GM10248 (cell line): ENCODE measurements at regions of chr12 and their contacts with region 1.

Region 1: DNA sequence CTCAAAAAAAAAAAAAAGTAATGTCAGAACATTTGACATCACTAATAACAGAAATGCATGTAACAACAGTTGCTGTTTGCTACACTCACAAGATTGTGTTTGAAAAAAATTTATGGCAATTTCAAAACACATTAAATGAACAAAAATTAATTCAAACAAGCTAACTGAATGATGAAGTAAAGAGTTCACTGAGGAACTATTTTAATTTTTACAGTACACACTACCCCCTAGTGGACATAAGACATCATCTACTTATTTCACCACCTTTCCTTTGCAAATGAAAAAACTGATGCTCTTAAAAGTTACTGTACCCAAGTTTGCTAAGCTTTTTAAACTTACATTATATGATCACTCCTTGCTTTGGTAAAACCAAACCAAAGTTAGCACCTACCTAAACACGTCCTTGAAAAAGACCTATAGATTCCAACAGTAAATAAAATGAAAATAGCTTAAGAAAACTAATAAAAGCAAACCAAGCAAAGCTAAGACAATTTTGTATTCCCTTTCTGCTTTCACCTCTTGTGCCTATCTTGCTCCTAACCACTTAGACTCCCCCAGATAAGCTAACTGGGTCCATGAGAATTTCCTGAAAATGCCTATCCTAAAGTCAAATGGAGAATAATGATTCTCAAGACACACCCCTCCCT is 22.2 kb downstream of the UBE2N start:
- DNase-seq: peak; percentile 27
- CTCF ChIP-seq: peak; percentile 53

Region 2: DNA sequence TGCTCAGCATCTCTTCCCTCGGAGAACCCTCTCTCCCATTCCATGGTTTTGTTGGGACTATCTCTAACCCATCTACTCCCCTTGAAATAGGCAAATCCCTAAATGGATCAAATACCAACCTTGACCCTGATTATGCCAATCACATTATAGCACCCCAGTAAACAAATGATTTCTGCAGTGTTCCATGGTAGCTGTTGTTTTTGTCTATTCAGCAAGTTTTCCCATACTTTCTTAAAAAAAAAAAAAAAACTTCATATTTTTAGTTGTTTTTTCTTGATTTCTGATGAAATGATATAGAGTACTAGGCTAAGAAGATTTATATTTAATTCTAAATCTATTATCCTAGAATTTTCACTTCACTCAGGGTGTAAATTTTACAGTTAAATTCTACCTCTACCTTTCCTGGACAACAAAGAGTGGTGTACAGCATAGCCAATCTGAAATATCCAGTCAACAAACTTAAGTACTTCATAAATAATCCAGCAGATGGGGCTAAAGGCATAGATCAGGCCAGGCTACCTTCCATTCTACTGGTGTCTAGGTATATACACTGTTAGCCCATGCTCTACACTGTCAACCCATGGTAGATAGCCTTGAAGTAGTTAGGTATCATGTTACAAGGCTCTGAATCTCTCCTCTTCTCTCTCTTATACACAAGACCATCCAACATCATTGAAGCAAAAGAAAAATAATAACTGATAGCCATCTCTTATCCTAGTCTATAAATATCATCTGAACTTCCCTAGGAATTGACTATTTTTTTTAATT is 634.5 kb before region 1 on chr12:
- CTCF ChIA-PET with region 1: interaction called, 34 read pairs
- POLR2A ChIA-PET with region 1: no interaction called
- DNase-seq: peak; percentile 50
- CTCF ChIP-seq: peak; percentile 55

Region 3: DNA sequence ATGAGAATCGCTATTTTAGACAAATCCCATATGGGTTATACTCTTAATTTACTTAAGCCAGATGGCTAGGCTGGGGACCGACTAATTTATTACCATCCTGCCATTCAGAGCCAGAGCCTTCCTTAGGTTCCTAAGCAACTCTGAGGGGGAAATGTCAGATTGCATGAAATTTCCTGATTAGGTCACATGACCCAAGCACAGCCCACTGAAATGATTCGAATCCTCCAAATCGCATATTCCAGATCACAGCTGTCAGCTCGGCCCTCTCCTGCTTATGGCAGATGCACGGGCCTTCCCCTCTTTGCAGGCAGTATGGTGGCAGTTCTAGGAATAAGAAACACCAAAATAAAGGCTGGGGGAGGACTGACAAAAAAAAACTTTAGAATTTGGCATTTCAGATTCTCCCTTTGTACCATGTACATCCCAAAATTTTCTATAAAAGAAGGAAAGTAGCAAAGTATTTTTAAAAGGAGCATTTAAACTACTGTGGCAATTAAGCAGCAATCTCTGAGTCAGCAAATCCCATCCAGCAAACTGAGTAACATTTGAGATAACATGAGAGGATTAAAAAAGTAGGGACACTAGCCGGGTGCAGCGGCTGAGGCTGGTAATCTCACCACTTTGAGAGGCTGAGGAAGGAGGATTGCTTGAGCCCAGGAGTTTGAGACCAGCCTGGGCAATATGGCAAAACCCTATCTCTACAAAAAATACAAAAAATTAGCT is 72.3 kb before region 1 on chr12:
- CTCF ChIA-PET with region 1: no interaction called
- POLR2A ChIA-PET with region 1: no interaction called
- DNase-seq: no peak
- CTCF ChIP-seq: no peak

Region 4: DNA sequence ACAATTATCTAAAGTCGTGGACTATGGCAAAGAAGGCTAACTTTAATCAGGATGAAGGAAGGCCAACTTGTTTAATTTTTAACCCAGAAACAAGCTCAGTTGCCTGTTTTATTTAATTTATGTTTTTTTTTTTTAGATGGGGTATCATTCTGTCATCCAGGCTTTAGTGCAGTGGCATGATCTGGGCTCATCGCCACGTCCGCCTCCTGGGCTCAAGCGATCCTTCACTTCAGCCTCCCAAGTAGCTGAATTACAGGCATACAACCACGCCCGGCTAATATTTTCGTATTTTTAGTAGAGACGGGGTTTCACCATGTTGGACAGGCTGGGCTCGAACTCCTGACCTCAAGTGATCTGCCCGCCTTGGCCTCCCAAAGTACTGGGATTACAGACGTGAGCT is 22.1 kb before region 1 on chr12:
- CTCF ChIA-PET with region 1: interaction called, 13 read pairs
- POLR2A ChIA-PET with region 1: no interaction called
- DNase-seq: no peak
- CTCF ChIP-seq: no peak

Region 5: DNA sequence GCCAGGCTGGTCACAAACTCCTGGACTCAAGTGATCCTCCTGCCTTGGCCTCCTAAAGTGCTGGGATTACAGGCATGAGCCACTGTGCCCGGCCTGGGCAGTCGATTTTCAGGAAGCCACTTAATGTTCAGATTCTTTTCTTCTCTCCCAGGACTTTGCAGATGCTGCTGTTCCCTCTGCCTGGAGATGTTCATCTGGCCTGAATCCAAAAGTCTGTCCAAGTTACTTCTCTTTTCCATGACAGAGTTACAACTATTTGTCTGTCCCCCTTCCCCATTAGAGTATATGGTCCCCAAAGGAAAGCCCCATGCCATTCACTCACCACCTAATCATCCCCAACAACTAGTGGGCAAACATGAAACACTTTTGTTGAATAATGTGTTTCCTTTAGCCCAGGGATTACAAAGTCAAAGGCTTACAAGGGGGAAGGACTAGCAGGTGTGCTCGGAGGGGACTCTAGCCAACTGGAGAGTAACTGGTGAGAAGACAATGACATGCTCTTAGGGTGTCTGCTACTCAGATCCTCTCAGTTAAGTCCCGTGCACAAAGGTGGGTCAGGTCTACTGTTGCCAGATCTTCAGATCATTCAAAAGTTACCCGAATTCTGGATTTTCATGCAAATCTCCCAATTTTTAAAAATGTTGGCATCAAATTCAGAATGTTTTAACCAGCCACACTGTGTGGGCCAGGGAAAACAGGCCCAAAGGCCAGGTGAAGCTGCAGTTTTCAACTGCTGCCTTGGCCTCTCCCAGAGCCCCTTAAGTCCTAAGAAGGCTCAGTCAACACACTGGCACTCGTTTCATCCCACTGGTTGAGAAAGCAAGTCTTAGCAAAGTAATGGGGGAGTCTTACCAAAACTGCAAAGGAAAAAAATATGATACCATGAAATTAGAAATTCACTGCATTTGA is 12.2 kb before region 1 on chr12:
- CTCF ChIA-PET with region 1: interaction called, 33 read pairs
- POLR2A ChIA-PET with region 1: interaction called, 3 read pairs
- DNase-seq: no peak
- CTCF ChIP-seq: no peak

Region 6: DNA sequence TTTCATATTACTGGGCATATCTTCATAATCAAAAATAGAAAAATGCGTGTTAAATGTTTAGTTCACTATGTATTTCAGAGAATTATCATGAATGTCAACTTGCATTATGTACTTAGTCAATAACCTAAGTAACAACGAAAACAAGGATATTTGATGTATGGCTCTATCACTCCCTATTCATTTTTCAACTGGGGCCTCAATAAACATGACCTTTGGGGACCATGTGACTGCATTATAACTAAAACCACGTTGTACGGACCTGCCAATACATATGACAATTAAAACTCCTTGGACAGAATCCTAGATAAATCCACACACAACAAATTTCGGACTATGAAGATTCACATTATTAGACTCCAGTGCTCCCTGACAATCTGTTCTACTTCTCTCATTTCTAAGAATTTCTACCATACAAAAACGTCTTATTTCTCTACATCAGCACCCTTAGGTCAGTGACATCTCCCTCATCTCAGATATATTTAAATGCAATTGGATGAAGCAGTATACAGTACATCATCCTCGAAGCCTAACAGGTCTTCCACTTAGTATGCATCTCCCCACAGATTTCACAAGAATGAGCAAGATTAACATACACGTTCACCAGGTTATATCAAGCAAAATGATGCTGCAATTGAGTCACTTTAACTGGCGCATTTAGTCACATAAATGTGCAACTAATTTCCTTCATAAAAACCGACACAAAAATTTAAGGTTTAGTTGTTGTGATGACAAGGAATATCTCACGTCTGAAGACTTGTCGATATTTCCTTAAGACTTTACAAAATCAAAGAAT is 20.7 kb after region 1 on chr12:
- CTCF ChIA-PET with region 1: interaction called, 108 read pairs
- POLR2A ChIA-PET with region 1: no interaction called
- DNase-seq: no peak
- CTCF ChIP-seq: no peak